ENCODE measurements at regions of chr7 and their contacts with region 1.

Region 1: GRCh38 chr7:151759591-151760042 is 117.3 kb downstream of the PRKAG2 start:
- DNase-seq: peak; percentile 73
- H3K4me3 Mint-ChIP-seq: no peak overlapping the region
- H3K27ac Mint-ChIP-seq: no peak overlapping the region
- H3K4me1 Mint-ChIP-seq: peaks cover 25% of the 10 kb centered on the region
- H3K27me3 Mint-ChIP-seq: peaks cover 4% of the 10 kb centered on the region

Region 2: GRCh38 chr7:151051108-151051507 is 708.5 kb before region 1 on chr7:
- CTCF ChIA-PET with region 1: no interaction called
- DNase-seq: peak; percentile 83
- H3K4me3 Mint-ChIP-seq: no peak overlapping the region
- H3K27ac Mint-ChIP-seq: no peak overlapping the region
- H3K4me1 Mint-ChIP-seq: peaks cover 30% of the 10 kb centered on the region
- H3K27me3 Mint-ChIP-seq: peaks cover 34% of the 10 kb centered on the region

Region 3: GRCh38 chr7:151570366-151570915 is 189.2 kb before region 1 on chr7:
- CTCF ChIA-PET with region 1: interaction called, 20 read pairs
- DNase-seq: no peak
- H3K4me3 Mint-ChIP-seq: no peak overlapping the region
- H3K27ac Mint-ChIP-seq: no peak overlapping the region
- H3K4me1 Mint-ChIP-seq: no peaks in the 10 kb centered on the region
- H3K27me3 Mint-ChIP-seq: no peaks in the 10 kb centered on the region

Region 4: DNA sequence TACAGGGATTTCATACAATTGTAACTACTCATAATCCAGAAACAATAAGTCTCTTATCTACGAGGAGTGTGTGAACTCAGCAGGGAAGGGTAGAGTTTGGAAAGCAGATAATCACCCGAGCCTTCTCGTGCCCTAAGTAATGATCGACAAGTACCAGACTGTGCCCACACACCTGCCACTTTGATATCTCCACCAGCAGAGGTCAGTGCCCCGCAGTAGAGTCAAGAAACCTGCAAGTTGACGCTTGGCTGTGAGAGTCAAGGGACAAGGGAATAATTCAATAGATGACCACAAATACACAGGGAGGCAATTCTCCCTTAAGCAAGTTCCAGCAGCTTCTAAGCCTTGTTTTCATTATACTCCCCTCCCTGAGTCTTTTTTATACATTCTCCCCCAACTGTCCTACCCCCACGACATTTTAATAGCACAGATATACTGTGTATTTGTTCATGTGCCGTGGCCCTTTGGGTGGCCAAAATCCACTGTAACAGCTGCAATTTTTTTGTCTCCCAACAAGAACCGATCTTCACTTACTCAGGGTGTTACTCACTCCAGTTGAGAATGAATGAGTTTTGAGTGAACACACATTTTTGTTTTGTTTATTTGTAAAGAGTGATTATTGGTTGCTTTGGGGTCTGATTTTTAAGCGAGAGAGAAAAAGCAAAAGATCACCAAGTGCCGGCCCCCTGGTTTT is 133.0 kb before region 1 on chr7:
- CTCF ChIA-PET with region 1: interaction called, 22 read pairs
- DNase-seq: peak; percentile 49
- H3K4me3 Mint-ChIP-seq: no peak overlapping the region
- H3K27ac Mint-ChIP-seq: no peak overlapping the region
- H3K4me1 Mint-ChIP-seq: peaks cover 19% of the 10 kb centered on the region
- H3K27me3 Mint-ChIP-seq: no peaks in the 10 kb centered on the region

Region 5: DNA sequence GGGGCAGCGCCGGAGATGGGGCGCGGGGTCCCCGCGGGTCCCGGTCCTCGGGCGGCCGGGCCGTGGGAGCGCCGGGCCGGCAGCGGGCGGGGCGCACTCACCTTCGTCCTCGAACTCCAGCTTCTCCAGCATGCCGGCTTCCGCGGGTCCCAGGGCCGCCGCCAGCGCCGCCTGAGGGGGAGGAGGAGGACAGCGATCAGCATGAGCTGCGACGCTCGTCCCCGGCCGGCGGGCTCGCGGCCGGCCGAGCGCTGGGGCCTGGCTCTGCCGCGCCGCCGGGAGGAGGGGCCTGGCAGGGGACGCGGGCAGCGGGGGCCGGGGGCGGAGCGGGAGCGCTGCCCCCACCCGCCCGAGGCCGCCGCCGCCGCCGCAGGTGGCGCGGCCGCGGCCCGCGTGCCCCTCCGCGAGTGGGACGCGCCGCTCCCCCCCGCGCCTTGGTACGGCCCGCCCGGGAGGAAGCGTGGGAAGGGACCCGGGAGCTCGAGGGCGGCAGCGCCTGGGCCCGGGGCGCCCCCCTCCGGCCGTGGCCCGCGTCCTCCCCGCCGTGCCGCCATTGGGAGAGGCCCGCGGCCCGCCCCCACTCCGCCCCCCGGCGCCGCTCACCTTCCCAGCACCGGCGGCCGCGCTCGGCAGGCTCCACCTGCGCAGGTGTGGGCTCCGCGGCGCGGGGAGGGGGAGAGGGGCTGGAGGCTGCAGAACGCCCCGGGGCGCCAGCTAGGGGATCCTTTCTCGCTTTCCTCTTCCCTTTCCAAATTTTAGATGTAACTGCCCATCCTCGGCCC is 127.5 kb before region 1 on chr7:
- CTCF ChIA-PET with region 1: interaction called, 26 read pairs
- DNase-seq: peak; percentile 89
- H3K4me3 Mint-ChIP-seq: peak overlapping the region; percentile 88
- H3K27ac Mint-ChIP-seq: peak overlapping the region; percentile 96
- H3K4me1 Mint-ChIP-seq: peaks cover 22% of the 10 kb centered on the region
- H3K27me3 Mint-ChIP-seq: no peaks in the 10 kb centered on the region

Region 6: DNA sequence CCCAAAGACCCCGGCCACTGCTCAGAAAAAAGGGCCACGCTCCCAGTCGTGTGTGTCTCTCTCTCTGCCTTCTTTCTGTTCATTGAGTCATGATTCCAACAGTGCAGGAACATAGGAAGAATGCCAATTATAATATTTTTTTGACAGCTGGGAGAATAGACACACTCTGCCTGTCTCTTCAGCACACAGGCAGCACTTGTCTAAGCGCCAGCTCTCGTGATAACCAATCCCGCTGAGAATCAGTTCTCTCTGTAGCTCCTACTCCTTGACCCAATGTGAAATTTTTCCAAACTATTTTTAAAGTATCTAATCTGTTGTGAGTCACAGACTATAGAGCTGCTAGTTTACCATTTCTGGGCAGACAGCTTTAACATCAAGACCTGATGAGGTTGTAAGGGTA is 94.2 kb before region 1 on chr7:
- CTCF ChIA-PET with region 1: no interaction called
- DNase-seq: no peak
- H3K4me3 Mint-ChIP-seq: no peak overlapping the region
- H3K27ac Mint-ChIP-seq: no peak overlapping the region
- H3K4me1 Mint-ChIP-seq: no peaks in the 10 kb centered on the region
- H3K27me3 Mint-ChIP-seq: no peaks in the 10 kb centered on the region

Region 7: GRCh38 chr7:151822541-151823181 is 63.0 kb after region 1 on chr7:
- CTCF ChIA-PET with region 1: no interaction called
- DNase-seq: no peak
- H3K4me3 Mint-ChIP-seq: no peak overlapping the region
- H3K27ac Mint-ChIP-seq: no peak overlapping the region
- H3K4me1 Mint-ChIP-seq: no peaks in the 10 kb centered on the region
- H3K27me3 Mint-ChIP-seq: no peaks in the 10 kb centered on the region

Region 8: GRCh38 chr7:152025077-152025936 is 265.7 kb after region 1 on chr7 and contains the start of gene GALNT11:
- CTCF ChIA-PET with region 1: no interaction called
- DNase-seq: peak; percentile 87
- H3K4me3 Mint-ChIP-seq: peak within 1 kb of the TSS; percentile 82
- H3K27ac Mint-ChIP-seq: peak within 1 kb of the TSS; percentile 86
- H3K4me1 Mint-ChIP-seq: peaks cover 29% of the 10 kb centered on the region
- H3K27me3 Mint-ChIP-seq: peaks cover 10% of the 10 kb centered on the region